CD14-positive monocyte (primary cell): ENCODE measurements at regions of chr2 and their contacts with region 1.

Region 1: GRCh38 chr2:32135409-32135808 is 30.3 kb upstream of the SLC30A6 start:
- DNase-seq: peak; percentile 16 to 47 (median 40)
- H3K4me3 ChIP-seq: no peak overlapping the region
- H3K4me3 Mint-ChIP-seq: no peak overlapping the region
- H3K27ac ChIP-seq: peak overlapping the region; percentile 4 to 26
- H3K27ac Mint-ChIP-seq: peak overlapping the region; percentile 46 to 85 (median 69)
- H3K4me1 ChIP-seq: peaks cover 4 to 6% of the 10 kb centered on the region in 2 donors
- H3K4me1 Mint-ChIP-seq: peaks cover 3% of the 10 kb centered on the region
- H3K27me3 ChIP-seq: no peaks in the 10 kb centered on the region
- H3K27me3 Mint-ChIP-seq: peaks cover 0 to 2% (median 1%) of the 10 kb centered on the region in 3 donors
- CTCF ChIP-seq: peak; percentile 42

Region 2: DNA sequence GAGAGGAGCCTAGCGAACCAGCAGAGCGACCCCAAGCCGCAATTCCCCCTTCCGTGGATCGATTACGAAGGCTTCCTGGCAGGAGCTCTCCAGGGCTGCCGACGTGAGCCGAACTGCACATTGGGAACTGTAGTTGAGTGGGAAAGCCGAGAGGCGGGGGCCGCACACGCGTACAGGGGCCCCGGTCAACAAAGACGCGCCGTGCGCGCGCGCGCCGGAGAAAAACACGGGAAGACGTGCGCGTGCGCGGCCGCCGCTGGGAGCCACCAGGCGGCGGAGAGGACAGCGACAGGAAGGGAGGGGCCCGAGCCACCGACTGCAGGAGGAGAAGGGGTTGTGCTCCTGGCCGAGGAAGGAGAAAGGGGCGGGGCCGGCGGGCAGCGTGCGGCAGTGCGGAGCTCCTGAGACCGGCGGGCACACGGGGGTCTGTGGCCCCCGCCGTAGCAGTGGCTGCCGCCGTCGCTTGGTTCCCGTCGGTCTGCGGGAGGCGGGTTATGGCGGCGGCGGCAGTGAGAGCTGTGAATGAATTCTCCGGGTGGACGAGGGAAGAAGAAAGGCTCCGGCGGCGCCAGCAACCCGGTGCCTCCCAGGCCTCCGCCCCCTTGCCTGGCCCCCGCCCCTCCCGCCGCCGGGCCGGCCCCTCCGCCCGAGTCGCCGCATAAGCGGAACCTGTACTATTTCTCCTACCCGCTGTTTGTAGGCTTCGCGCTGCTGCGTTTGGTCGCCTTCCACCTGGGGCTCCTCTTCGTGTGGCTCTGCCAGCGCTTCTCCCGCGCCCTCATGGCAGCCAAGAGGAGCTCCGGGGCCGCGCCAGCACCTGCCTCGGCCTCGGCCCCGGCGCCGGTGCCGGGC is 71.9 kb before region 1 on chr2 and contains the start of gene SPAST:
- intact Hi-C with region 1: loop called (anchors 5 to 10 kb)
- DNase-seq: peak; percentile 95 to 97 (median 96)
- H3K4me3 ChIP-seq: peak within 1 kb of the TSS; percentile 89 to 96 (median 96)
- H3K4me3 Mint-ChIP-seq: peak within 1 kb of the TSS; percentile 98
- H3K27ac ChIP-seq: peak within 1 kb of the TSS; percentile 81 to 91
- H3K27ac Mint-ChIP-seq: peak within 1 kb of the TSS; percentile 92 to 97 (median 96)
- H3K4me1 ChIP-seq: peaks cover 25 to 32% of the 10 kb centered on the region in 2 donors
- H3K4me1 Mint-ChIP-seq: peaks cover 29% of the 10 kb centered on the region
- H3K27me3 ChIP-seq: no peaks in the 10 kb centered on the region
- H3K27me3 Mint-ChIP-seq: peaks cover 0 to 4% (median 0%) of the 10 kb centered on the region in 3 donors
- CTCF ChIP-seq: peak; percentile 45
- polyA plus RNA-seq, gene SPAST: 10.4 to 17.4 (median 14.0) TPM